Naive thymus-derived CD8-positive, alpha-beta T cell (primary cell): ENCODE measurements at regions of chr2 and their contacts with region 1.

Region 1: GRCh38 chr2:19362755-19363473 is 4.5 kb upstream of the OSR1 start:
- DNase-seq: peak in 4 of 10 donors; percentile 30 to 42 (median 37)
- ATAC-seq: peak; percentile 51 to 57
- H3K4me3 Mint-ChIP-seq: peak overlapping the region; percentile 88 to 97 (median 95)
- H3K27ac Mint-ChIP-seq: peak overlapping the region; percentile 42 to 94 (median 76)
- H3K4me1 Mint-ChIP-seq: peaks cover 25 to 46% (median 42%) of the 10 kb centered on the region in 4 donors
- H3K27me3 Mint-ChIP-seq: peaks cover 11 to 52% (median 29%) of the 10 kb centered on the region in 5 donors

Region 2: GRCh38 chr2:19321946-19322345 is 41.0 kb before region 1 on chr2:
- POLR2A ChIA-PET with region 1: no interaction called
- DNase-seq: no peak
- ATAC-seq: no peak
- H3K4me3 Mint-ChIP-seq: no peak overlapping the region
- H3K27ac Mint-ChIP-seq: no peak overlapping the region
- H3K4me1 Mint-ChIP-seq: no peaks in the 10 kb centered on the region
- H3K27me3 Mint-ChIP-seq: no peaks in the 10 kb centered on the region

Region 3: DNA sequence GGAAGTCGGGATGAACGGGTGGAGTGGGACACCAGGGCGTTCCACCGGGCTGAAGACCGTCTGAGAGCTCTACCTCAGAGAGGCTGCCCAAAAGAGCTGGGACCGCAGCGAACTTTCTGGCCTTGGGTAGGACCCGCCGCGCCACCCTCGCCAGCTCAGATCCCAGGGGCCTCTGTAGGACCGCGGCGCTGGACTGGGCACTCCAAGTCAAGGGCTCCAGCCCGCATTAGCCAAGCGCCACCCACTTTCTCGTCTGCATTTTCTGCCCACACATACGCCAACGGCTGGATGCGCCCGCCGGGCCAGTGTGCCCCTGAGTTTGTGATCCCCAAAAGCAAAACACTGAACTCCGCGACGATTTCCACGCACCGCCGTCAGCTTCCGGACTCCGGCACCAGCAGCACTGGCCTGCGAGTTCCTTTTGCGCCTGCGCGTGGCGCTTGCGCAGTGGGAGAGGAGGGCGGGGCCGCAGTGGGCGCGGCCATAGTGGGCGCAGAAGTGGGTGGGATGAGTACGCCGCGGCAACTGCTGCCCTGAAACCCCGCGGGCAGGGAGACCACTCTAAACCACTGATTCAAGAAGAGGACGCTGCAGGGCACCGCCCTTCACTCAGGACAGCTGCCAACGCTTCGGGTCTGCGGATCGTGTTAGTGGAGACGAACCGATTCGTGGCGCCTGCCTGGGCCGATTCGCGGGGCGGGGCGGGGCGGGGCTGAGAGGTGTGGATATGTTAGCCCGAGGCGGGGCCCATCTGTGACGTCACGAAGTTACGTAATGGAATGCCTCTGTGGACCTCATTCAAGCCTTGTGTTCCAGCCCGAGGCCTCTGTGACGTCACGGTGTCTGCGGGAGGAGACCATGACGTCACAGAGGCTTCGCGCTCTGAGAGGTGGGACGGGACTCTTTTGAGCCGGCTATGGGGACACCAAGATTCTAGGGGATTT is 15.0 kb before region 1 on chr2:
- POLR2A ChIA-PET with region 1: interaction called, 51 read pairs
- DNase-seq: peak; percentile 90 to 100 (median 96)
- ATAC-seq: peak; percentile 86 to 89
- H3K4me3 Mint-ChIP-seq: peak overlapping the region; percentile 93 to 99 (median 96)
- H3K27ac Mint-ChIP-seq: peak overlapping the region; percentile 96 to 99 (median 98)
- H3K4me1 Mint-ChIP-seq: peaks cover 17 to 44% (median 33%) of the 10 kb centered on the region in 4 donors
- H3K27me3 Mint-ChIP-seq: peaks cover 16 to 40% (median 29%) of the 10 kb centered on the region in 5 donors

Region 4: DNA sequence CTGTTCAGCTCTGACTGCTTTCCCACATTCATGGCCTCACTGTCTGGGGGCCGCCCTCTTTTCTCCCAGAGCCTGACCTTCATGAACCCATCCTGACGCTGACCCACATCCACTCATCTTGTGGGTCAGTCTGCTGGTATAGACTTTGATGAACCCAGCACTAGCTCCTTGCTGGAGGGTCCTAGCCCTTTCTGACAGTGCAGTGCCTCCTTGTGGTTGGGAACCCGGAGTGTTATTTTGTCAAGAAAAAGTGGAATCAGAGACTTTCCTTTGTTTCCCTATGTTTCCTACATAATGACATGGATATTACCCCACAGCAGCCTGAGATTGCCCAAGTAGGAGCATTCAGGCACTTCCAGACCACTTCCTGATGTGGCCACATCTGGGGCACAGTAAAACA is 14.8 kb after region 1 on chr2:
- POLR2A ChIA-PET with region 1: no interaction called
- DNase-seq: no peak
- ATAC-seq: no peak
- H3K4me3 Mint-ChIP-seq: no peak overlapping the region
- H3K27ac Mint-ChIP-seq: no peak overlapping the region
- H3K4me1 Mint-ChIP-seq: no peaks in the 10 kb centered on the region
- H3K27me3 Mint-ChIP-seq: peaks cover 22 to 58% (median 27%) of the 10 kb centered on the region in 5 donors